ENCODE measurements at regions of chr2 and their contacts with region 1.

Region 1: DNA sequence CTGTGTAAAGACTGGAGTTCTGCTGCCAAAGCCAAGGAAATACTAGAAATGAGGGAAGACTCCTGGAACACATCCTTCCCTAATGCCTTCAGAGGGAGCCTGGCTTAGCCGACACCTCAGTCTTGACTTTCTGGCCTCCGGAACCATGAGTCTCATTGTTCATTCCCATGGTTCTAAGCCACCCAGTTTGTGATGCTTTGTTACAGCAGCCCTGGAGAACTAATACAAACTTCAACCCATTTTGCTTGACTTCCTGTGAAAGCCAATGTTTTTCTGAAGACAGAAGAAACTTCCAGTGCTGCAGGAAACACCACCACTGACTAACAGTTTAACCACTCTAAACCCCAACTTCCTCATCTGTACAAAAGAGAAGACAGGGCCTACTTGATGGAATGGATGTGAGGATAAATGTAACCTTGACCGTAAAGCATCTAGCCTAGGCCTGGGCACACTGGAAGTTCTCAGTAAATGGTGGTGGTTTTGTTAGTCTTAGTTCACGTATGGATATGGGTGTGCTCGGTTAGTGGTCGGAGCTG is 85.9 kb upstream of the RFX8 start:
- DNase-seq: no peak
- ATAC-seq: no peak
- H3K4me3 Mint-ChIP-seq: no peak overlapping the region
- H3K27ac Mint-ChIP-seq: no peak overlapping the region
- H3K4me1 Mint-ChIP-seq: peaks cover 7% of the 10 kb centered on the region
- H3K27me3 Mint-ChIP-seq: peaks cover 5% of the 10 kb centered on the region
- CTCF ChIP-seq: no peak

Region 2: DNA sequence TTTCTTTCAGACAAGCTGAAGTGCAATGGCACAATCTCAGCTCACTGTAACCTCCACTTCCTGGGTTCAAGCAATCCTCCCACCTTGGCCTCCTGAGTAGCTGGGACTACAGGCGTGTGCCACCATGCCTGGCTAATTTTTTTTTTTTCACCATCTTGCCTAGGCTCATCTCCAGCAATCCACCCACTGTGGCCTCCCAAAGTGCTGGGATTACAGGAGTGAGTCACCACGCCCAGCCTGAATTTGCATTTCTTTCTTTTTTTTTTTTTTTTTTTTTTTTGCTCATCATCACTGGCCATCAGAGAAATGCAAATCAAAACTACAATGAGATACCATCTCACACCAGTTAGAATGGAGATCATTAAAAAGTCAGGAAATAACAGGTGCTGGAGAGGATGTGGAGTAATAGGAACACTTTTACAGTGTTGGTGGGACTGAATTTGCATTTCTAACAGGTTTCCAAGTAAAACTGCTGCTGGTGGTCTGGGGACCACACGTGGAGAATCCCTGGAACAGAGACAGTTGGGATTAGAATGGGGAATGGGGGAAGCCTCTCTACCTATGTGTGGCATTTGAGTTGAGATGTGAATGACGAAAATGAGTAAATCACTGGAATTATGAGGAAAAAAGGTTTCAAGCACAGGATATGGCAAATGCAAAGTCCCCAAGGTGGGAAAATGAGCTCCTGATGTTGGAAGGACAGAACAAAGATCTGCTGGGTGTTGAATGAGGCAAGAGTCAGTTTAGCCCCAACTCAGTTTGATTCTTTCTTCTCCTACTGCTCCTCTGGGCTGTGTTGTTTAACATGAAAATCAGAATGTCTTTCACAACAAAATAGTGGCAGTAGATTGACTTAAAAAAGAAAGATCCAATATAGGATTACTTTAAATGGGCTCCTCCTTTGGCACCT is 47.8 kb after region 1 on chr2:
- CTCF ChIA-PET with region 1: no interaction called
- POLR2A ChIA-PET with region 1: no interaction called
- intact Hi-C with region 1: loop called (anchors 5 kb)
- DNase-seq: no peak
- ATAC-seq: no peak
- H3K4me3 Mint-ChIP-seq: no peak overlapping the region
- H3K27ac Mint-ChIP-seq: no peak overlapping the region
- H3K4me1 Mint-ChIP-seq: peaks cover 28% of the 10 kb centered on the region
- H3K27me3 Mint-ChIP-seq: no peaks in the 10 kb centered on the region
- CTCF ChIP-seq: no peak

Measured in activated B cell treated with CpG ODN at 0.5 μM for 24 hours (primary cell).